Activated CD4-positive, alpha-beta memory T cell treated with anti-CD3 and anti-CD28 coated beads for 36 hours (primary cell): ENCODE measurements at regions of chr19 and their contacts with region 1.

Region 1: GRCh38 chr19:10403137-10404021 is at the start of gene CDC37:
- DNase-seq: peak; percentile 99
- H3K4me3 Mint-ChIP-seq: peak within 1 kb of the TSS; percentile 89
- H3K27ac Mint-ChIP-seq: peak within 1 kb of the TSS; percentile 84
- H3K4me1 Mint-ChIP-seq: peaks cover 67% of the 10 kb centered on the region
- H3K27me3 Mint-ChIP-seq: no peaks in the 10 kb centered on the region
- total RNA-seq, gene CDC37: 189 to 207 TPM

Region 2: GRCh38 chr19:10259162-10259905 is 144.0 kb before region 1 on chr19:
- CTCF ChIA-PET with region 1: interaction called, 27 read pairs
- POLR2A ChIA-PET with region 1: no interaction called
- intact Hi-C with region 1: no loop called
- DNase-seq: peak; percentile 98
- H3K4me3 Mint-ChIP-seq: no peak overlapping the region
- H3K27ac Mint-ChIP-seq: peak overlapping the region; percentile 93
- H3K4me1 Mint-ChIP-seq: peaks cover 26% of the 10 kb centered on the region
- H3K27me3 Mint-ChIP-seq: no peaks in the 10 kb centered on the region

Region 3: GRCh38 chr19:10292206-10292788 is 111.1 kb before region 1 on chr19:
- CTCF ChIA-PET with region 1: interaction called, 12 read pairs
- POLR2A ChIA-PET with region 1: no interaction called
- intact Hi-C with region 1: no loop called
- DNase-seq: peak; percentile 87
- H3K4me3 Mint-ChIP-seq: peak overlapping the region; percentile 68
- H3K27ac Mint-ChIP-seq: no peak overlapping the region
- H3K4me1 Mint-ChIP-seq: peaks cover 61% of the 10 kb centered on the region
- H3K27me3 Mint-ChIP-seq: peaks cover 76% of the 10 kb centered on the region

Region 4: DNA sequence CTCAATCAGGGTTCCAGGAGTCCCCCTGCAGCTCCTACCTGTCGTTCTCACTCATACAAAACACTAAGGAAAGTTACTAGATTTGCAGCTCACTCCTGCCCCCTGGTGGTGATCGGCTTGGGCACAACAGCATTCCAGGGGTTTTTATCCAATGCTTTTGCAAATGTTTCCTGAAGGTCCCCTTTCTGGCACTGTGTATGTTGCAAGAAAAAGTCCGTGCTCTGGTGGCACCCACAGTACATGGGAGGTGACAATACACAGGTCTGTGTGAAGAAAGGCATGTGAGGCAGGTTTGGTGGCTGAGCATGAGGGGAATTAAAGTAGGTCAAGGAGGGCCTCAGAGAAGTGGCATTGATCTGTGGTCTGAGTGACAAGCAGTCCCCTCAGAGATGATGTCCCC is 14.4 kb before region 1 on chr19:
- CTCF ChIA-PET with region 1: interaction called, 41 read pairs
- POLR2A ChIA-PET with region 1: interaction called, 6 read pairs
- intact Hi-C with region 1: no loop called
- DNase-seq: peak; percentile 89
- H3K4me3 Mint-ChIP-seq: no peak overlapping the region
- H3K27ac Mint-ChIP-seq: no peak overlapping the region
- H3K4me1 Mint-ChIP-seq: peaks cover 7% of the 10 kb centered on the region
- H3K27me3 Mint-ChIP-seq: no peaks in the 10 kb centered on the region

Region 5: GRCh38 chr19:10424011-10424637 is 20.7 kb after region 1 on chr19:
- CTCF ChIA-PET with region 1: interaction called, 836 read pairs
- POLR2A ChIA-PET with region 1: interaction called, 8 read pairs
- intact Hi-C with region 1: loop called (anchors 2 kb)
- DNase-seq: peak; percentile 80
- H3K4me3 Mint-ChIP-seq: peak overlapping the region; percentile 68
- H3K27ac Mint-ChIP-seq: no peak overlapping the region
- H3K4me1 Mint-ChIP-seq: peaks cover 78% of the 10 kb centered on the region
- H3K27me3 Mint-ChIP-seq: peaks cover 39% of the 10 kb centered on the region

Region 6: GRCh38 chr19:10478903-10479384 is 75.6 kb after region 1 on chr19:
- CTCF ChIA-PET with region 1: interaction called, 8 read pairs
- POLR2A ChIA-PET with region 1: no interaction called
- intact Hi-C with region 1: loop called (anchors 2 kb)
- DNase-seq: peak; percentile 93
- H3K4me3 Mint-ChIP-seq: peak overlapping the region; percentile 35
- H3K27ac Mint-ChIP-seq: no peak overlapping the region
- H3K4me1 Mint-ChIP-seq: peaks cover 8% of the 10 kb centered on the region
- H3K27me3 Mint-ChIP-seq: no peaks in the 10 kb centered on the region